Gastrocnemius medialis (tissue), 4 donors: ENCODE measurements at regions of chr21 and their contacts with region 1.

Region 1: DNA sequence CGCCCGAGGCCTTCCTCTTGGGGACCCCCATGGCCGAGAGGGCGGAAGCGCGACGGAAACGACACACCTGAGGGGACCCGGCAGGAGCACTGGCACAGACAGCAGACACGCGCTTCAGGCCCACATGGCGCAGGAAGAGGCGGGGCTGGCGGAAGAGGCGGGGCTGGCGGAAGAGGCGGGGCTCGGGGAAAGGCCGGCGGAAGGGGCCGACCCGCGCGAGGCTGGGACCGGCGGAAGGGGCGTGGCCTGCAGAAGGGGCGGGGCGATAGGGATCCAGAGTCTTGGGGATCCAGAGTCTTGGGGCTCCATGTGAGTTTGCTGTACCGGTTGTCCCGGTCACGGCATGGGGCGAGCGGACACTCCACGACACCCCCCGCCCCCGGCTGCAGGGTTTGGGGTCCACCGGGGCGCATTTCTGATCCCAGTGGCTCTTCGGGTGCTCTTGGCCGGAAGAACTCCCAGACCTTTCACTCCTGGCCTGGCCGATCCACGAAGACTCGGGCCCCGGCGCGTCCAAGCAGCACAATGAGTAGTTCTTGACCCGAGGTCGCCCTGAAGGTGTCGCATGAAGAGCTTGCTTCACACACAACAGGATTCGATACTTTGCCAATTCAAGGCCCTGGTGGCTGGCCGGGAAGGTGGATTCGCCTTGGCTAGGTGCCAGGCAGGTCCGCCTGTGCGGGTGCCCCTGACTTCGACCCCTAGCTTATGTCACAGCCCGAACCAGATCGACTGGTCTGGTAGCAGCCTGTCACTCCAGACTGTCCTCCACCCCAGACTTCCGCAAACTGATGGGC is at the start of gene URB1:
- DNase-seq: peak; percentile 84 to 88
- ATAC-seq: peak; percentile 93 to 95
- H3K4me3 ChIP-seq: peak within 1 kb of the TSS; percentile 93 to 99 (median 95)
- H3K27ac ChIP-seq: peak within 1 kb of the TSS; percentile 82 to 92 (median 86)
- H3K4me1 ChIP-seq: peaks cover 19 to 21% of the 10 kb centered on the region in 2 donors
- H3K27me3 ChIP-seq: peaks cover 0 to 15% (median 0%) of the 10 kb centered on the region in 3 donors
- CTCF ChIP-seq: no peak
- POLR2A ChIP-seq: peak; percentile 64 to 73
- total RNA-seq, gene URB1: 13.7 to 17.7 (median 15.2) TPM

Region 2: DNA sequence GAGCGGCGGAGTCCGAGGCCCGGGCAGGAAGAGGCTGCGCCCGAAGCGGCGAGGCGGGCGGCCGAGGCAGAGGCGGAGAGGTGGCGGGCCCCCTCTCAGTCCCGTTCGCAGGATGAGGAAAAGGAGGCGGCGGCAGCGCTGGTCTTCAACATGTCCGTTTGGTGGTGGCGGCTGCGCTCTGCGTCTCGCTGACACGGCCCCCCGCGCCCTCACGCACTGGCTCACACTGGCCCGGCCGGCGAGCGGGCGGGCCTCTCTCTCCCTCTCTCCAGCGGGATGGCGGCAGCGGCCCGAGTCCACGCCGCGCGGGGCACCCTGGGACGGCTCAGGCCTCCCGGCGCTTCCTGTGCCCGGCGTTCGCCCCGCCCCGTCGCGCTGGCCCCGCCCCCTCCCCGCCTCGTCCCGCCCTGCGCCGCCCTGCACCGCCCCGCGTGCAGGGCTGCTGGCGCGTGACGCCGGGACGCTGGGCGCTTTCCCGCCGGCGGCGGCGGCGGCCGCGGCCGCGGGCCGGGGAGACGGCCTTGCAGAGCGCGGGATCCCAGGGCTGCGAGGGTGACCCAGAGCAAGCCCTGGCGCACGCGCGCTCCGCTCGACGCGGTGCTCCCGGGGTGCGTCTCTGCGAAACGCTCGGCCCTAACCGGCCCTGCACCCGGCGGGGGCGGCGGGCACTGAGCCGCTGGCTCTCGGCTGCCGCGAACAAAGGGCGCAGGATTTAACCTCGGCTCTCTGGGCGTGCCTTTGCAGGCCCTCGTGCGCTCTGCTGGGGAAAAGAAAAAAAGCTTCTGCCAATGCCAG is 661.1 kb before region 1 on chr21 and contains the start of gene SCAF4:
- in situ Hi-C with region 1: loop called in 1 of 4 experiments (anchors 25 kb)
- intact Hi-C with region 1: no loop called
- DNase-seq: peak; percentile 83 to 90
- ATAC-seq: peak; percentile 81 to 87
- H3K4me3 ChIP-seq: peak within 1 kb of the TSS; percentile 88 to 94 (median 91)
- H3K27ac ChIP-seq: peak within 1 kb of the TSS; percentile 92 to 99 (median 97)
- H3K4me1 ChIP-seq: peaks cover 39 to 44% of the 10 kb centered on the region in 2 donors
- H3K27me3 ChIP-seq: no peaks in the 10 kb centered on the region
- CTCF ChIP-seq: no peak
- POLR2A ChIP-seq: peak; percentile 90 to 95
- total RNA-seq, gene SCAF4: 8.2 to 11.5 (median 10.0) TPM

Region 3: DNA sequence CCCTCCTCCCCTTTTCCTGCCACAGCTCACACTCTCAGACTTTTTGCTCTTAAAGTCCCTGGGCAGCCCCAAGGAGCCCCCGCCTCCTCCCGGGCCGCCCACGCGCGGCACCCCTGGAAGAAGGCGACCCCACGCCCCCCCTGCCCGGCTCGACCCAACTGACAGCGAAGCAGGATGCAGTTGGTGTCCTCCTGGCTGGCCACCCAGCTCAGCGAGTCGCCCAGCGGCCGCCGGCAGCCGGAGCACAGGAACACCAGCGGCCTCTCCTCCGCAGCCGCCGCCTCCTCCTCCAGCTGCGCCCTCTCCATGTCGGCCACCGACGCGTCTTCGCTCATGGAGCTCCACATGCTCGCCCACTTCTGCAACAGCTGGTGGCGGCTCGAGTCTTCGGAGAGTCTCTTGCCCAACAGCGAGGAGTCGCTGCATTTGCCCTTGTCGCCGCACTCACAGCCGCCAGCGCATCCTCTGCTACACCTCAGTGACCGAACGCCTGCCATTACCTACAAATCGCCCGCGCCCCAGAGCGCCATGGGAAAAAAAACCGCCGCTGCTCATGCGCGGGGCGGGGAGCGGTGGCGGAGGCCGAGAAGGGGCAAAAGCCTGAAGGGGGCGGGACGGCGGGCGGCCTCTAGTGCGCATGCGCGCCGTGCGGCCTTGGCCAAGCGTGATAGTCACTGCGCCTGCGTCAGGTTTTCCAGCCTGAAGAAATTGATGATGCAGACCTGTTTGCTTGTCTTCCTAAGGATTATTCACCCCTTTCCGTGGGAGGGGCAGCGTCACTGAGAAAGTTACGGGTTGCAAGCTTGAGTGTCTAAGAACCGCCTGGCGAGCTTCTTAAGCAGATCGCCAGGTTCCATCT is 114.3 kb before region 1 on chr21 and contains the start of gene MIS18A:
- in situ Hi-C with region 1: no loop called
- intact Hi-C with region 1: loop called (anchors 10 kb)
- DNase-seq: peak; percentile 86 to 93
- ATAC-seq: peak; percentile 95 to 98
- H3K4me3 ChIP-seq: peak within 1 kb of the TSS; percentile 82 to 98 (median 92)
- H3K27ac ChIP-seq: peak within 1 kb of the TSS; percentile 41 to 72 (median 60)
- H3K4me1 ChIP-seq: peaks cover 14 to 25% of the 10 kb centered on the region in 2 donors
- H3K27me3 ChIP-seq: no peaks in the 10 kb centered on the region
- CTCF ChIP-seq: peak in 2 of 5 experiments; percentile 9 to 12
- POLR2A ChIP-seq: peak; percentile 9 to 33
- total RNA-seq, gene MIS18A: 0.51 to 2.7 (median 0.87) TPM

Region 4: GRCh38 chr21:32412162-32413014 is 19.3 kb after region 1 on chr21 and contains the start of gene EVA1C:
- in situ Hi-C with region 1: no loop called
- intact Hi-C with region 1: loop called (anchors 1 kb)
- DNase-seq: peak; percentile 30 to 39
- ATAC-seq: peak; percentile 55 to 63
- H3K4me3 ChIP-seq: peak within 1 kb of the TSS; percentile 79 to 92 (median 89)
- H3K27ac ChIP-seq: peak within 1 kb of the TSS; percentile 85 to 96 (median 94)
- H3K4me1 ChIP-seq: peaks cover 0 to 9% of the 10 kb centered on the region in 2 donors
- H3K27me3 ChIP-seq: no peaks in the 10 kb centered on the region
- CTCF ChIP-seq: peak in 4 of 5 experiments; percentile 24 to 54 (median 34)
- POLR2A ChIP-seq: peak; percentile 41 to 72
- total RNA-seq, gene EVA1C: 9.2 to 15.8 (median 12.1) TPM

Region 5: DNA sequence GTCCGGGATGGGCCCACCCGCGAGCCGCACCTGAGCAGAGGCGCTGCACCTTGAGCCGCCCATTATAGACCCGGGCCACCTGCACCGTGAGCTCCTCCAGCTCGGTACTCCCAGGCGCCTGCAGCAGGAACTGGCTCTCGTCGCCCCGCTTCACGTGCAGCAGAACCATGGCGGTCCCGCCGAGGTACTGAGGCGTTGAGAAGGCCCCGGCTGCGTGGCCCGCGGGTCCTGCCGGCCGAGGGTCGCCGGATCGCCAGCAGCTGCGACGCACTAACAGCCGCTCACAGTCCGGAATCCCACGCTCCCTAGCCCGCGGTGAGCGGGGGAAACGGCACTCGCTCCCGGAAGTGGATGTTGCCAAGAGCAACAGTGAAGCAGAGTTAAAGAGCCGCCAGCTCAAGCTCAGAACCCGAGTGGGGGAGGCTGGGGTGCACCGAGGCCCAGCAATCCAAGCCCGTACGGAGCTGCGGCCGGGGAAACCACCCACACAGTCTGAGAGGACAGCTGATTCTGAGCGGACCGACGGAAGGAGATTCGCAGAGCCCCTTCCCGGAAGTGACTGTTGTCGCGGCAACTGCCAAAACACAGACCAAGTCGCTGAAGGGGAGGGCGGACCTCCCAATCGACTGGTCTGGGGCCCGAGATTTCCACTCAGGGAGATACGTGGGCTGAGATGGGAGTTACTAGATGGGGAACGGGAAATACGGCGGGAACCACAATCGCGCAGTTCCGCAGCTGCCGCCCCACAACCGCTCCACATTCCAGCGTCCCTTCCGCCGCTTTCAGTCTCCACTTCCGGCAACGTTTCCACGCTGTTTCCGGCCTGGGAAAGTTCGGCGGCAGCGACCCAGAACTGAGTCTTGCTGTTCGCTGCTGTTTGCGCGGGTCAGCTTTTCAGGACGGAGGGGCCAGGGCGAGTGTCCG is 219.3 kb after region 1 on chr21 and contains the start of gene CFAP298:
- in situ Hi-C with region 1: no loop called
- intact Hi-C with region 1: loop called (anchors 2 kb)
- DNase-seq: peak; percentile 75 to 86
- ATAC-seq: peak; percentile 95 to 97
- H3K4me3 ChIP-seq: peak within 1 kb of the TSS; percentile 70 to 100 (median 90)
- H3K27ac ChIP-seq: peak within 1 kb of the TSS; percentile 81 to 93 (median 88)
- H3K4me1 ChIP-seq: peaks cover 6 to 15% of the 10 kb centered on the region in 2 donors
- H3K27me3 ChIP-seq: no peaks in the 10 kb centered on the region
- CTCF ChIP-seq: no peak
- POLR2A ChIP-seq: no peak
- total RNA-seq, gene CFAP298: 21.4 to 45.6 (median 38.2) TPM

Region 6: DNA sequence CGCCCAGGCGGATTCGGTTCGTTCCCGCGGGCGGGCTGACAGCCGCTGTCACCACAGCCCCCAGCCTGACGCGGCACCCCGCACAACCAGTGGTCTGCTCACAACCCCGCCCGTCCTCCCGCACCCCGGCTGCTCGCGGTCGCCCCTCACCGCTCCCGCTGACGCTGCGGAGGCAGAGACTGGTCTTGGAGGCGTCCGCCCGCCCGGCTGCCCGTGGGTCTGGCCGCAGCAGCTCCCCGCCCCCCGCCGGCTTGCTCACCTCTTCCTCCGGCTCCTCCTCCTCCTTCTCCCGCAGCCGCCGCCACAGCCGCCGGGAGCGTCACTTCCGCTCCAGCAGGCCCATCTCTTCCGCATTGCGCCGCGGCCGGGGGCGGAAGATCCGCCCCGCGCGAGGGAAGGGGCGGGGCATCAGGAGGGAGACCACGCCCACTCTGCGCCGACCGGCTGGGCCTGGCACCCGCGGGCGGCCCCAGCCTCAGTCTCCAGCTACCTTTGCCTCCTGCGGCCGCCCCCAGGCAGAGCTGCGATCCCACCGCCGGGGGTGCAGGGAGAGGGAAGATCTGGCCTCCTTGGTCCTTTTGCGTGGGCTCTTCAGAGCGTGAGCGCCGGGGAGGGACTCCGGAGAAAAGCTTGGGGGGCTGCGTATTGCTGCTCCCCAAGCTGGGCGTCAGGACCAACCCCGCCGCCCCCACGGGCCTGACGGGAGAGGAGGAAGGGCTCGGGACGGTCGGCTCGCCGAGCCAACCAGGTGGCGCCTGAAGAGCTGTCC is 334.8 kb after region 1 on chr21 and contains the start of gene SYNJ1:
- in situ Hi-C with region 1: loop called in 2 of 4 experiments (anchors 25 kb)
- intact Hi-C with region 1: loop called (anchors 2 kb)
- DNase-seq: peak; percentile 91 to 92
- ATAC-seq: peak; percentile 96 to 97
- H3K4me3 ChIP-seq: peak within 1 kb of the TSS; percentile 77 to 94 (median 92)
- H3K27ac ChIP-seq: peak within 1 kb of the TSS; percentile 83 to 94 (median 94)
- H3K4me1 ChIP-seq: peaks cover 14 to 19% of the 10 kb centered on the region in 2 donors
- H3K27me3 ChIP-seq: no peaks in the 10 kb centered on the region
- CTCF ChIP-seq: no peak
- POLR2A ChIP-seq: peak; percentile 83
- total RNA-seq, gene SYNJ1: 10.0 to 34.8 (median 10.8) TPM

Region 7: DNA sequence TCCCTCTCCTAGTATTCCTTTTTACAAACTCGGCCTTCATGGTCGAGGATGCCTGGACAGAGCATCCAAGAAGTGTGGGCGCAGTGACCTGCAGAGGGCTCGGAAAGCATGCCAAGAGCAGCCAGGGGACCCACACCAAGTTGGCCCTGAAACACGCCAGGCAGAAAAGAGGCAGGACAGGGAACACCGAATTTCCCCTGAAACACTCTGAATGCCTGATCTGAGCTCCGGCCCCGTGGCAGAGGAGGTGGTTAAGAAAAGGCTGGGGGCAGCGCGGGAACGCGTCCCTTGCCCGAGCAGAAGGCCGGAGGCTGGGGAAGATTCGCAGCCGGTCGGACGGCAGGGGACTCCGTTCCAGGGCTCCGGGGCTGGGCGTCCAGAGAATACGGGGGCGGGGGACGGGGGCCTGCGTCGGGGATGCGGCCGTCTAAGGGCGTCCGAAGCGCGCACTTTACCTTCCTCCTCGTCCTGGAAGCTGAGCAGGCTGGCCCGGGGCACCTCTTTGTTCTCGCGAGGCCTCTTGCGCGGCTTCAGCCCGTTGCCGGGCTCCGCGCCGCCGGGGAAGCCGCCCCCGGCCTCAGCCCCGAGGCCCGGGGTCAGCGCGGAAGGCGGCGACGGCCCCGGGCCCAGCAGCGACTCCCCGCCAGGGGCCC is 377.9 kb after region 1 on chr21:
- in situ Hi-C with region 1: no loop called
- intact Hi-C with region 1: loop called (anchors 2 kb)
- DNase-seq: peak; percentile 27 to 42
- ATAC-seq: peak; percentile 53 to 60
- H3K4me3 ChIP-seq: peak overlapping the region; percentile 83 to 94 (median 86)
- H3K27ac ChIP-seq: peak overlapping the region; percentile 87 to 95 (median 88)
- H3K4me1 ChIP-seq: peaks cover 34 to 40% of the 10 kb centered on the region in 2 donors
- H3K27me3 ChIP-seq: peaks cover 0 to 4% (median 0%) of the 10 kb centered on the region in 3 donors
- CTCF ChIP-seq: no peak
- POLR2A ChIP-seq: no peak